Lower lobe of right lung (tissue), 2 donors: ENCODE measurements at regions of chr1 and their contacts with region 1.

Region 1: DNA sequence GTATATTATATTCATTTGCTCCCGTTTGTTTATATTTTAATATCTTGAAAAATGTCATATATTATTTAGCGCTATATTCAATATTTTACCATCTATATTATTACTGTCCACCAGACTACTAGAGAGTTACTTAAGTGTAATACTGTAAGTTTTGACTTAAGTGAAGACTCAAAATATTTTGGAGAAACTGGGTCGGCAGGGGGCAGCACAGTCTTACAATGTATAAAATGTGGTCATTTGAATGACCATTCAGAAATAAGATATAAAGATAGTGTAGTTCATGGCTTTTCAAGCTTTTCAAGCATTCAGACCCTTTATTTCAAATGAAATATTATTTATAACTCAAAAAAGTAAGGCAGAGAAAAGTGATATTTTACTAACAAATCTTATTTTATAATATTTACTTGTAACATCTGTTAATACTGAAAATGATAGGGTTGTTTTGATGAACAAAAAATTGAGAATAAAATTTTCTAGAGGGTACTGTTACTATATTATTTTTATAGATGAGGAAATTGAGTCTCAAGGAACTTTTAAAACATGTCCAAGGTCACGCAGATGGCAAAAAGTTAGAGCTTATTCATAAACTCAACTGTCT is 89.0 kb upstream of the SERTAD4 start:
- DNase-seq: peak; percentile 75
- ATAC-seq: peak in 1 of 2 donors; percentile 57
- H3K4me3 ChIP-seq: no peak overlapping the region
- H3K27ac ChIP-seq: no peak overlapping the region
- H3K4me1 ChIP-seq: no peaks in the 10 kb centered on the region
- H3K27me3 ChIP-seq: no peaks in the 10 kb centered on the region
- CTCF ChIP-seq: peak; percentile 68

Region 2: GRCh38 chr1:210061992-210062391 is 81.6 kb before region 1 on chr1:
- intact Hi-C with region 1: no loop called
- DNase-seq: no peak
- ATAC-seq: no peak
- H3K4me3 ChIP-seq: no peak overlapping the region
- H3K27ac ChIP-seq: no peak overlapping the region
- H3K4me1 ChIP-seq: no peaks in the 10 kb centered on the region
- H3K27me3 ChIP-seq: no peaks in the 10 kb centered on the region
- CTCF ChIP-seq: no peak

Region 3: DNA sequence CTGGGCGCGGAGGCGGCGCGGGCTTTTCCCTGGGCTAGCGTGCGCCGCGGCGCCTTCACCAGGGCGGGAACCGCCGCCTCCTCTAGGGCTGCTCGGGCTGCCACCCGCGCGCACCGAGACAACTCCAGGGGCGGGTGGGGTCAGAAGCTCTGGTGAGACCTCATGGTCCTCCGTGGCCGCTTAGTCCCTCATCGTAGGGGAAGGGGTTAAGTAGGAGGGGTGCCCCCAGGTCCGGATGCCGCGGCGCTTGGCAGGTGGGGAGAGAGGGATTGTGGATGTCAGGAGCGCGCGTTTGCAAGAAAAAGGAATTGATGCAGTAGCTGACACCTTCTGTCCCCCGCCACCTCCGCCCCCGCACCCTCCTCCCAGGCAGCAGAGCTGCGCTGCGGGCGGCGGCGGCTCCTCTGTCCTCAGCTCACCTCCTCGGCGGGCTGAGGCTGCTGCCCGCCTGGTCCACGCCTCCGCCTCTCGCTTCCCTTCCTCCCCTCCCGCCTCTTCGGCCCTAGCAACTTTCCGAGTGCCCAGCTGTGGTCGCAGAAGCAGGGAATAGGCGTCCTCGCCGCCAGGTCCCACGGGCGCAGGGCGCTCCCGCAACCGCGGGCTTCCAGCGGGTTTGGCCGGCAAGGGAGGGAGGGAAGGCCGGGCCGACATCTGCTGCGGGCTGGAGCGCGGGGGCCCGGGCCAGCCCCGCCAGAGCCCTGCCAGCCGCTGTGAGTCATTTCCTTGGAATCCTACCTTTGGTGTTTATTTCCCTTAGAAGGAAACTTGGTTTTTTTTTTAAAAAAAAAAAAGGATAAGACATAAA is 89.9 kb after region 1 on chr1:
- intact Hi-C with region 1: no loop called
- DNase-seq: no peak
- ATAC-seq: peak; percentile 77 to 89
- H3K4me3 ChIP-seq: peak overlapping the region; percentile 64
- H3K27ac ChIP-seq: peak overlapping the region; percentile 81
- H3K4me1 ChIP-seq: peaks cover 27% of the 10 kb centered on the region
- H3K27me3 ChIP-seq: peaks cover 18% of the 10 kb centered on the region
- CTCF ChIP-seq: no peak

Region 4: GRCh38 chr1:210311726-210312493 is 168.3 kb after region 1 on chr1:
- intact Hi-C with region 1: loop called (anchors 5 kb)
- DNase-seq: no peak
- ATAC-seq: peak; percentile 29 to 36
- H3K4me3 ChIP-seq: peak overlapping the region; percentile 45
- H3K27ac ChIP-seq: peak overlapping the region; percentile 70
- H3K4me1 ChIP-seq: peaks cover 8% of the 10 kb centered on the region
- H3K27me3 ChIP-seq: no peaks in the 10 kb centered on the region
- CTCF ChIP-seq: no peak